Panc1 (cell line): ENCODE measurements at regions of chr17 and their contacts with region 1.

Region 1: GRCh38 chr17:17496189-17497064 is at the start of gene RASD1:
- DNase-seq: peak; percentile 25
- ATAC-seq: peak; percentile 90
- H3K4me3 ChIP-seq: peak within 1 kb of the TSS; percentile 54 to 62
- H3K27ac ChIP-seq: no peak within 1 kb of the TSS
- H3K4me1 ChIP-seq: peaks cover 3% of the 10 kb centered on the region
- H3K27me3 ChIP-seq: no peaks in the 10 kb centered on the region
- CTCF ChIP-seq: peak; percentile 98
- total RNA-seq, gene RASD1: 1.7 TPM

Region 2: GRCh38 chr17:17313350-17313991 is 183.0 kb before region 1 on chr17:
- CTCF ChIA-PET with region 1: interaction called, 11 read pairs
- POLR2A ChIA-PET with region 1: no interaction called
- in situ Hi-C with region 1: no loop called
- intact Hi-C with region 1: no loop called
- DNase-seq: peak; percentile 32
- ATAC-seq: peak; percentile 90
- H3K4me3 ChIP-seq: no peak overlapping the region
- H3K27ac ChIP-seq: no peak overlapping the region
- H3K4me1 ChIP-seq: no peaks in the 10 kb centered on the region
- H3K27me3 ChIP-seq: no peaks in the 10 kb centered on the region
- CTCF ChIP-seq: peak; percentile 86

Region 3: GRCh38 chr17:17356149-17356930 is 140.1 kb before region 1 on chr17:
- CTCF ChIA-PET with region 1: no interaction called
- POLR2A ChIA-PET with region 1: interaction called, 7 read pairs
- in situ Hi-C with region 1: no loop called
- intact Hi-C with region 1: loop called (anchors 2 kb)
- DNase-seq: peak; percentile 84
- ATAC-seq: peak; percentile 88
- H3K4me3 ChIP-seq: no peak overlapping the region
- H3K27ac ChIP-seq: no peak overlapping the region
- H3K4me1 ChIP-seq: no peaks in the 10 kb centered on the region
- H3K27me3 ChIP-seq: no peaks in the 10 kb centered on the region
- CTCF ChIP-seq: peak; percentile 100

Region 4: GRCh38 chr17:17568749-17569195 is 72.3 kb after region 1 on chr17:
- CTCF ChIA-PET with region 1: interaction called, 12 read pairs
- POLR2A ChIA-PET with region 1: no interaction called
- in situ Hi-C with region 1: no loop called
- intact Hi-C with region 1: loop called (anchors 5 kb)
- DNase-seq: no peak
- ATAC-seq: peak; percentile 70
- H3K4me3 ChIP-seq: no peak overlapping the region
- H3K27ac ChIP-seq: no peak overlapping the region
- H3K4me1 ChIP-seq: no peaks in the 10 kb centered on the region
- H3K27me3 ChIP-seq: no peaks in the 10 kb centered on the region
- CTCF ChIP-seq: peak; percentile 90

Region 5: GRCh38 chr17:17641621-17642409 is 145.4 kb after region 1 on chr17:
- CTCF ChIA-PET with region 1: interaction called, 11 read pairs
- POLR2A ChIA-PET with region 1: no interaction called
- in situ Hi-C with region 1: no loop called
- intact Hi-C with region 1: loop called (anchors 5 kb)
- DNase-seq: peak; percentile 52
- ATAC-seq: peak; percentile 93
- H3K4me3 ChIP-seq: no peak overlapping the region
- H3K27ac ChIP-seq: no peak overlapping the region
- H3K4me1 ChIP-seq: no peaks in the 10 kb centered on the region
- H3K27me3 ChIP-seq: no peaks in the 10 kb centered on the region
- CTCF ChIP-seq: peak; percentile 87

Region 6: DNA sequence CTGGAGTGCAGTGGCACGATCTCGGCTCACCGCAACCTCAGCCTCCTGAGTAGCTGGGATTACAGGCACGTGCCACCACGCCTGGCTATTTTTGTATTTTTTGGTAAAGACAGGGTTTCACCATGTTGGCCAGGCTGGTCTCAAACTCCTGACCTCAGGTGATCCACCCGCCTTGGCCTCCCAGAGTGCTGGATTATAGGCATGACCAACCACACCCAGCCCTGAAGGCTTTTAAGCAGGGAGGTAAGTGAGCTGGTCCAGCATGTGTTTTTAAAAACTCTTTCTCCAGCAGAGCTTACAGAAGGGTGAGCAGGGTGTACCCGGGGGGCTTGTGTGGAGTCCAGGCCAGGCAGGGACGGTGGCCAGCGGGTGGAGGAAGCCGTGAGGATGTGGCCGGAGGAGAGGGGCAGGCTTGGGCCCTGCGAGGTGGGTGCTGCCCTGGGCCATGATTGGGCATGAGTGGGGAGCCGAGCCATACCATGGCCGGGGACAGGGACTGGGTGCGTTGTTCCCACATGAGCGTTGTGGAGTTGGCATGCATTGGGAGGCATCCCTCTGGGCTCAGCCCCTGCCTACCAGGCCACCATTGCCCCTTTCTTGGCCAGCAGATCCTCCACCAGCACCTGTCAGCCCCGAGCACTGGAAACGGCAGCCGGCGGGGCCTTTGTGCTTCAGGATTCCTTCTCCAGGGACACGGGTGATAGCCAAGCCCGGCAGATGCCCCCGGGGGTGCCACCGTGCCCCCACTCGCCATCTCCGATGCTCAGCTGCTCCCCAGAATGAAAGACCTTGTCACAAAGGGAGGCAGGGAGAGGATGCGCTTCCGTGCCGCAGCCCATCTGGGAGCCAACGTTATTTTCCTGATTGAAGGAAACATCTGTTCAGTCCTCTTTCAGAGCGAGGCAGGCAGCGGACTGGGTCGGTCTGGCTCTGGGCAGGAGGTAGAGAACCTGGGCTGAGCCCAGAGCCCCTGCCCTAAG is 249.3 kb after region 1 on chr17:
- CTCF ChIA-PET with region 1: interaction called, 10 read pairs
- POLR2A ChIA-PET with region 1: no interaction called
- in situ Hi-C with region 1: no loop called
- intact Hi-C with region 1: no loop called
- DNase-seq: no peak
- ATAC-seq: no peak
- H3K4me3 ChIP-seq: no peak overlapping the region
- H3K27ac ChIP-seq: no peak overlapping the region
- H3K4me1 ChIP-seq: peaks cover 40% of the 10 kb centered on the region
- H3K27me3 ChIP-seq: no peaks in the 10 kb centered on the region
- CTCF ChIP-seq: no peak